Lower leg skin (tissue), 4 donors: ENCODE measurements at regions of chr14 and their contacts with region 1.

Region 1: DNA sequence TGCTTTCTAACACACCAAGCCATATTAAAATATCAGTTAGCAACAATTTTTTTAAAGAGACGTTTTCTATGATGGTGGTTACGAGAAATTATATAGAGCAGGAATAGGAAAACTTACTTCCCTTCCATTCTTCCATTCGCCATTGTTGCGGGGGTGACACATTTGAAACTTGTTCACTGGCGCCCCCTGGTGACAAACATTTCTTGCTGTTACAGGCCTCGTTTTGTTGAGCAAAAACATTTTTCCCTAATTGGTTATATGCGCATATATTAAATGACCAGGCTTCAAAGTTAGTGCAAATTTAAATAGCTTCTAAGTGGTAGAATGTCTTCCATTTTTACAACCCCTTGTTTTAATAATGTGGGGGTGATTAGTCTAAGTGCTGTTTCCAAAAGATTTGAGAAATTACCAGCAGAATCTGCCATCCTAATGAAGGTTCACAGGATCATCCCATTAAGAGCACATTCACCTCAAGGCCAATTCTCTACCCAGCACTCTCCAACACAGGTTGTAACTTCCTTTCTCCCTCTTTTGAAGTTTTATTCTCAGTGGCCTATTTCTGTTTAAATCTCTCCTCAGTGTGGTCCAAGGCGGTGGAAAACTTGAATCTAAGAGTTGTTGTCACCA is 1124.7 kb downstream of the FLRT2 start:
- DNase-seq: peak in 1 of 2 donors; percentile 76
- H3K4me3 ChIP-seq: no peak overlapping the region
- CTCF ChIP-seq: no peak
- POLR2A ChIP-seq: no peak

Region 2: DNA sequence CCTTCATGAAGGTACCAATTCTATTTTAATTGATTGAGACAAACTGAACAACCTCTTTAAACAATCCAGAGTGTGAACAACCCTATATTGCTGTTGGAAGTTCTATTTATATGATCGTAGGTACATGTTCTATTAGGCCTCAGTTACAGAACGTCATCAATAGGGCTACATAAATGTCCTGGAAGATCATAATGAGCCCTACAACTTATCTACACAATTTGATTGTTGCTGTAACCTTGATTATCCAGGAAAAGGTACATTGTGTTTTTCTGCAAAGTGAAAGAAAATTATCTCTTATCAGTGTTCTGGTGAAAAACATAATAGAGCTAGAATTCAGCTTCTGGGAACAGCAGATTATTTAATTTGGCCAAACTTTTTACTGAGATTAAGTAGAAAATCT is 725.4 kb after region 1 on chr14:
- intact Hi-C with region 1: loop called (anchors 5 kb)
- DNase-seq: no peak
- H3K4me3 ChIP-seq: no peak overlapping the region
- CTCF ChIP-seq: no peak
- POLR2A ChIP-seq: no peak